HCT116 (cell line): ENCODE measurements at regions of chr2 and their contacts with region 1.

Region 1: GRCh38 chr2:96024336-96025193 is 10.2 kb downstream of the GPAT2 start:
- DNase-seq: no peak
- ATAC-seq: no peak
- H3K4me3 ChIP-seq: no peak overlapping the region
- H3K27ac ChIP-seq: no peak overlapping the region
- H3K4me1 ChIP-seq: no peaks in the 10 kb centered on the region
- H3K27me3 ChIP-seq: no peaks in the 10 kb centered on the region
- CTCF ChIP-seq: no peak
- POLR2A ChIP-seq: no peak
- RAD21 ChIP-seq: no peak

Region 2: DNA sequence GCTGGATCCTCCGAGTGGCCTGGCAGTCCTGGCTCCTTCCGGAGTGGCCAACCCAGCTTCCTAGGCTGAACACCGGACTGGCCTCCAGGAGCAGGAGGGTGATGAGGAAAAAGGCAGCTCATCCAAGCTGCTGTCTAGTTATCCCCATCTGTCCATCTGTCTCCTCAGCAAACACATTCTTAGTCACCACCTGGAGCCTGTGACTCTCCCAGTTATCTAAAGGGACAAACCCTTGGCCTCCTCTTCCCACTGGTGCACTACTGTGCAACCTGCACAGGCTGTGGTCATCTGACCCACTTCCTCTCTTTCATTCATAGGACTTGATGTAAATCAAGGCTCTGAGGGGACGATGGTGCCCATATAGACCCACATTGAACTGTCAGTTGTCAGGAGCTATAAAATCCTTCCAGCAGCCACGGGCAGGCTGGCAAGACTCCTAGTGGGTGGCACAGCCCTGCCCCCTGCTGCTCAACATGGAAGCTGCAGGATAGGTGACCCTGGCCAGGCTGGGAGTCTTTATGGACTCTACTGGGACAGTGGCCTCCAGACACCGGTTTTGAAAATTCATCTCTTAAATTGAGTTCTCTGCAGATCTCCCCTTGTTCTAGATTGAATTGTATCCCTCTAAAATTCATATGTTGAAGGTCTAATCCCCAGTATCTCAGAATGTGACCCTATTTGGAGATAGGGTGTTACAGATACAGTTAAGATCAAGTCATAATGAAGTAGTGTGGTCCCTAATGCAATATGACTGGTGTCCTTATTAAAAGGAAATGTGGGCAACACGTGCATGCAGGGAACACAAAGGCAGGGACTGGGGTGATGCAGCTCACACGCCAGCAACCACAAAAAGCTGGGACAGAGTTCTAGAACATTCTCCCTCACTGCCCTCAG is 149.9 kb after region 1 on chr2:
- CTCF ChIA-PET with region 1: interaction called, 17 read pairs
- POLR2A ChIA-PET with region 1: no interaction called
- RAD21 ChIA-PET with region 1: interaction called in 1 of 2 experiments, 5 read pairs
- intact Hi-C with region 1: no loop called
- DNase-seq: peak; percentile 39
- ATAC-seq: peak; percentile 99
- H3K4me3 ChIP-seq: no peak overlapping the region
- H3K27ac ChIP-seq: no peak overlapping the region
- H3K4me1 ChIP-seq: peaks cover 0 to 3% of the 10 kb centered on the region in 2 experiments; a peak in 1 of 4 replicates
- H3K27me3 ChIP-seq: no peaks in the 10 kb centered on the region
- CTCF ChIP-seq: peak; percentile 94 to 97 (median 96)
- POLR2A ChIP-seq: no peak
- RAD21 ChIP-seq: peak; percentile 96